ENCODE measurements at regions of chr15 and their contacts with region 1.

Region 1: GRCh38 chr15:92903941-92904831 is 4.1 kb downstream of the CHD2 start:
- DNase-seq: peak; percentile 99 to 100 (median 99)
- ATAC-seq: peak; percentile 92 to 96 (median 94)
- H3K4me3 ChIP-seq: peak overlapping the region; percentile 32 to 75 (median 63)
- H3K27ac ChIP-seq: peak overlapping the region; percentile 92 to 99 (median 94)
- H3K4me1 ChIP-seq: peaks cover 19 to 77% (median 57%) of the 10 kb centered on the region in 12 donors
- H3K27me3 ChIP-seq: no peaks in the 10 kb centered on the region
- CTCF ChIP-seq: no peak
- POLR2A ChIP-seq: peak in 1 of 2 donors; percentile 92

Region 2: DNA sequence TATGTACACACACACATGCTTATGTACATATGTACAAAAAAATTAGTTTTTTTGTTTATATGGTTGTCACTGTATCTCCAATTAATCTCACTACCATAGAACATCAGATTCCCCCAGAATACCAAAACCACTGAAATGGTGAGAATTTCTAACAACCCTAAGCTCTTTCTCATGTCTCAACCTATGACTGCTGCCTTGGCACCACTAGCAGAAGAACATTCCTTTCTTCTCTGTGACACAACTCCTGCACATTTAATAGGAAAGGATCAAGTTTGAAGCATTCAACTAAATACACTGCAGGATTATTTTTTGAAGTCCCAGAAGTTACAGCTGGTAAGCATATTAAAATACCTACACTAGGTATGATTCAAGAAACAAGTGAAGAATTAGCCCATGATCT is 358.2 kb before region 1 on chr15:
- intact Hi-C with region 1: no loop called
- DNase-seq: no peak
- ATAC-seq: no peak
- H3K4me3 ChIP-seq: no peak overlapping the region
- H3K27ac ChIP-seq: no peak overlapping the region
- H3K4me1 ChIP-seq: peaks cover 0 to 8% (median 0%) of the 10 kb centered on the region in 12 donors
- H3K27me3 ChIP-seq: peaks cover 0 to 3% (median 0%) of the 10 kb centered on the region in 9 donors
- CTCF ChIP-seq: no peak
- POLR2A ChIP-seq: no peak

Region 3: DNA sequence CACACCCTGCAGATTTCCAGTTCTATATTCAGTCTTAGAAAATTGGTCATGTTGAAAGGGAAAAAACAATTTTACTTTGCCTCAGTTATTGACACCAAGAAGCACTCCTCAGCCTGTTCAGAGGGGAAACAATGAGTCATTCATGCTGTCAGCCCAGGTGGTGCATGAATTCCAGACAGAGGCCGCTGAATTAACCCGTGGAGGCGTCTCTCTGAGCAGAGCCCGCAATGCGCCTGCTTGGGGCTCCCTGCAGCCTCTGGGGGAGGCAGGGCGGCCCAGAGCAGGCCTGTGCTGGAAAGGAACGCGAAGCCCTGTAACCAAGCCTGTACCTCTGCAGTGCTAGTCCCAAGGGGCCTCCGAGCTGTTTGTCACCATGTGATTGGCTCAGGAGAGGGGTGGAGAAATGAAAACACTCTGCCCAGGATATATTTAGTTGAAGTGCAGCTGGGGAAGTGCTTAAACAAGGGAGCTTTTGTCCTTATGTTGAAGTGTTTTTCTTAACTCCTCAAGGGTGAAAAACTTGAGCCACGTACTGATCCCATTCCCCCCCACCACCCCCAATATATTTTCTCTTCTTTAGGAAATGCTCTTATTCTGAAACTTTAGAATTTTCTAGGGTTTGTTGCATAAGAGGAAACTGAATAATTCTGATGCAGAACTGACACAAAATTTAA is 72.4 kb before region 1 on chr15:
- intact Hi-C with region 1: loop called in 3 of 10 experiments (anchors 1 to 5 kb)
- DNase-seq: peak; percentile 94 to 99 (median 96)
- ATAC-seq: peak; percentile 98 to 99 (median 98)
- H3K4me3 ChIP-seq: peak overlapping the region in 11 of 12 donors; percentile 12 to 49 (median 37)
- H3K27ac ChIP-seq: peak overlapping the region; percentile 89 to 98 (median 95)
- H3K4me1 ChIP-seq: peaks cover 12 to 53% (median 33%) of the 10 kb centered on the region in 12 donors
- H3K27me3 ChIP-seq: no peaks in the 10 kb centered on the region
- CTCF ChIP-seq: no peak
- POLR2A ChIP-seq: peak; percentile 56 to 95

Region 4: GRCh38 chr15:92917606-92918407 is 13.6 kb after region 1 on chr15:
- intact Hi-C with region 1: loop called in 1 of 10 experiments (anchors 1 kb)
- DNase-seq: peak; percentile 90 to 95 (median 94)
- ATAC-seq: peak; percentile 40 to 74 (median 68)
- H3K4me3 ChIP-seq: peak overlapping the region in 7 of 12 donors; percentile 2 to 48 (median 24)
- H3K27ac ChIP-seq: peak overlapping the region; percentile 69 to 99 (median 84)
- H3K4me1 ChIP-seq: peaks cover 3 to 100% (median 79%) of the 10 kb centered on the region in 12 donors
- H3K27me3 ChIP-seq: no peaks in the 10 kb centered on the region
- CTCF ChIP-seq: peak; percentile 87 to 96 (median 92)
- POLR2A ChIP-seq: peak in 1 of 2 donors; percentile 32

Region 5: GRCh38 chr15:93189561-93189960 is 285.4 kb after region 1 on chr15:
- intact Hi-C with region 1: no loop called
- DNase-seq: no peak
- ATAC-seq: peak in 2 of 4 donors; percentile 20 to 51
- H3K4me3 ChIP-seq: no peak overlapping the region
- H3K27ac ChIP-seq: no peak overlapping the region
- H3K4me1 ChIP-seq: no peaks in the 10 kb centered on the region
- H3K27me3 ChIP-seq: peaks cover 0 to 3% (median 0%) of the 10 kb centered on the region in 9 donors
- CTCF ChIP-seq: no peak
- POLR2A ChIP-seq: no peak